SK-N-SH (cell line): ENCODE measurements at regions of chr11 and their contacts with region 1.

Region 1: GRCh38 chr11:125464270-125464662 is 31.8 kb downstream of the FEZ1 start:
- DNase-seq: no peak
- H3K4me3 ChIP-seq: no peak overlapping the region
- H3K27ac ChIP-seq: no peak overlapping the region
- H3K4me1 ChIP-seq: no peaks in the 10 kb centered on the region; a peak in 1 of 4 replicates
- H3K27me3 ChIP-seq: no peaks in the 10 kb centered on the region
- CTCF ChIP-seq: no peak
- EP300 ChIP-seq: no peak
- RAD21 ChIP-seq: no peak

Region 2: GRCh38 chr11:125451400-125452124 is 12.7 kb before region 1 on chr11:
- CTCF ChIA-PET with region 1: interaction called, 37 read pairs
- POLR2A ChIA-PET with region 1: no interaction called
- DNase-seq: peak; percentile 80
- H3K4me3 ChIP-seq: no peak overlapping the region
- H3K27ac ChIP-seq: no peak overlapping the region
- H3K4me1 ChIP-seq: peaks cover 9 to 14% of the 10 kb centered on the region in 2 experiments; a peak in 2 of 4 replicates
- H3K27me3 ChIP-seq: no peaks in the 10 kb centered on the region
- CTCF ChIP-seq: no peak
- EP300 ChIP-seq: no peak
- RAD21 ChIP-seq: no peak

Region 3: DNA sequence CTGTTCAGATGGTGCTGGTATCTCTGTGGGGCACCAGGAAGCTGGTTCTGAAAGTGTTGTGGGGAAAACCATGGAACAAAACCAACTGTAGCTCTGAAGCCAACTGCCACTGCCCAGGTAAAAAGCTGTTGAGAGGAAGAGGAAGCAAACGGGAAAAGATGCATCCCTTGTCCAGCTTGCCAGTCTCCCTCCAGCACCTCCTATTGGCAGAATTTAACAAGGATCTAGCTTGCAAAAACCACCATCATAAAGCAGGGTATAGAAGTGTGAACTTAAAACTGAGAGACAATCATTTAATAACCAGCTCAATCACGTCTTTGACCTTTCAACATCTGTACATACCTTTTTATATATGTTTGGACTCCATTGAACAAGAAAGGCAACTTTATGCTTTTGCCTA is 286.4 kb after region 1 on chr11:
- CTCF ChIA-PET with region 1: no interaction called
- POLR2A ChIA-PET with region 1: no interaction called
- DNase-seq: no peak
- H3K4me3 ChIP-seq: no peak overlapping the region
- H3K27ac ChIP-seq: no peak overlapping the region
- H3K4me1 ChIP-seq: no peaks in the 10 kb centered on the region
- H3K27me3 ChIP-seq: peaks cover 15% of the 10 kb centered on the region; the same call in 1 of the 2 replicates
- CTCF ChIP-seq: no peak
- EP300 ChIP-seq: no peak
- RAD21 ChIP-seq: no peak